Body of pancreas (tissue), 4 donors: ENCODE measurements at regions of chr10 and their contacts with region 1.

Region 1: GRCh38 chr10:12264204-12264940 is 68.4 kb downstream of the CDC123 start:
- DNase-seq: peak; percentile 75 to 87 (median 80)
- ATAC-seq: peak; percentile 69
- H3K4me3 ChIP-seq: no peak overlapping the region
- H3K27ac ChIP-seq: peak overlapping the region in 2 of 4 donors; percentile 19 to 58
- H3K4me1 ChIP-seq: peaks cover 22% of the 10 kb centered on the region
- H3K27me3 ChIP-seq: no peaks in the 10 kb centered on the region
- CTCF ChIP-seq: peak; percentile 77 to 92 (median 83)
- POLR2A ChIP-seq: no peak

Region 2: DNA sequence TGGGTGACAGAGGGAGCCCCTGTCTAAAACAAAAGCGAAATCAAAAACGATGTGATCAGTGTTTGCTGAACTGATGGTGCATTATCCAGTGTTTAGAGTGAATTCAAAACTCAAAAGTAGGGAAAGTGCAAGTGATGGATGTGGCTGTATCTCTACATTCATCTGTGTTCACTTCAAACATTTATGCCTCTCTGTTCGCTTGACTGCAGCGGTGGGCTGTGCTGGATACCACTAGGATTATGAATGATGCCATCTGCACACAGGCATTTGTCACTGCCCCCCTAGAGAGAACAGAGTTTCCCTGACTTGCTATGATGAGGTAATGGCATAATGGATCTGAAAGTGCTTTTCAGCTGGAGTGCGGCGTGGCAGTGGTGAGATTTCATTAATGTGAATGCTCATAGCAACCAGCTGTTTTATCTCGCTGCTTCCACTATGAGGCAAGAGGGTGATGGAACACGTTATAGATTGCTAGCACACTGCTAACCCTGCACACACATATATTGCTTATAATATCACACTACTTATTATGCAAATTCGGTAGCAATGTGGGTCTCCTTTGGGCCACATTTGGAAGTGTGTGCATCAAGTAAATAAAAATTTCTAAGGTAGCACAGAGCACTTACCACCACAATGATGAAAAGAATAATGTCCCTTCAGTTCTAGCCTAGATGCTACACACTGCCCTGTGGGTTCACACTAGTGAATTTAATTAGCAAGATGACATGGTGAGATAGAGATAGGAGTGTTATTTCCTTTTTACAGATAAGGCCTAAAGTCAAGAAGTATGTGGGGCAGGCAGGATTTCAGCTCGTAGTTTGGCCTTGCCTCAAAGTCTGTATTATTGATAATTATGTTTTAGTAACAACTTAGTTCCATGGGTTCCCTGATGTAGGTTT is 249.7 kb after region 1 on chr10:
- intact Hi-C with region 1: no loop called
- DNase-seq: no peak
- ATAC-seq: no peak
- H3K4me3 ChIP-seq: no peak overlapping the region
- H3K27ac ChIP-seq: no peak overlapping the region
- H3K4me1 ChIP-seq: peaks cover 16% of the 10 kb centered on the region
- H3K27me3 ChIP-seq: no peaks in the 10 kb centered on the region
- CTCF ChIP-seq: no peak
- POLR2A ChIP-seq: no peak

Region 3: GRCh38 chr10:12656518-12657142 is 392.3 kb after region 1 on chr10:
- intact Hi-C with region 1: loop called (anchors 5 kb)
- DNase-seq: peak in 1 of 4 donors; percentile 36
- ATAC-seq: peak; percentile 74
- H3K4me3 ChIP-seq: no peak overlapping the region
- H3K27ac ChIP-seq: no peak overlapping the region
- H3K4me1 ChIP-seq: no peaks in the 10 kb centered on the region
- H3K27me3 ChIP-seq: no peaks in the 10 kb centered on the region
- CTCF ChIP-seq: peak; percentile 44 to 82 (median 71)
- POLR2A ChIP-seq: no peak

Region 4: GRCh38 chr10:12707461-12708185 is 443.3 kb after region 1 on chr10:
- intact Hi-C with region 1: loop called (anchors 10 kb)
- DNase-seq: peak in 3 of 4 donors; percentile 31 to 43 (median 41)
- ATAC-seq: peak; percentile 65
- H3K4me3 ChIP-seq: no peak overlapping the region
- H3K27ac ChIP-seq: peak overlapping the region; percentile 19 to 61 (median 38)
- H3K4me1 ChIP-seq: peaks cover 37% of the 10 kb centered on the region
- H3K27me3 ChIP-seq: no peaks in the 10 kb centered on the region
- CTCF ChIP-seq: peak in 6 of 7 experiments; percentile 23 to 50 (median 48)
- POLR2A ChIP-seq: no peak